ENCODE measurements at regions of chr1 and their contacts with region 1.

Region 1: GRCh38 chr1:167268398-167268787 is 47.7 kb downstream of the POU2F1 start:
- DNase-seq: no peak
- ATAC-seq: no peak
- H3K4me3 ChIP-seq: no peak overlapping the region
- H3K27ac ChIP-seq: no peak overlapping the region
- H3K4me1 ChIP-seq: peaks cover 8 to 21% of the 10 kb centered on the region in 2 experiments
- H3K27me3 ChIP-seq: no peaks in the 10 kb centered on the region
- CTCF ChIP-seq: no peak
- POLR2A ChIP-seq: no peak
- RAD21 ChIP-seq: no peak

Region 2: GRCh38 chr1:167330601-167331293 is 62.4 kb after region 1 on chr1:
- CTCF ChIA-PET with region 1: no interaction called
- POLR2A ChIA-PET with region 1: no interaction called
- RAD21 ChIA-PET with region 1: no interaction called
- intact Hi-C with region 1: no loop called
- DNase-seq: no peak
- ATAC-seq: no peak
- H3K4me3 ChIP-seq: no peak overlapping the region
- H3K27ac ChIP-seq: no peak overlapping the region
- H3K4me1 ChIP-seq: no peaks in the 10 kb centered on the region
- H3K27me3 ChIP-seq: no peaks in the 10 kb centered on the region
- CTCF ChIP-seq: no peak
- POLR2A ChIP-seq: no peak
- RAD21 ChIP-seq: no peak

Region 3: GRCh38 chr1:167342846-167343245 is 74.5 kb after region 1 on chr1:
- CTCF ChIA-PET with region 1: interaction called, 10 read pairs
- POLR2A ChIA-PET with region 1: no interaction called
- RAD21 ChIA-PET with region 1: interaction called in 1 of 2 experiments, 4 read pairs
- intact Hi-C with region 1: no loop called
- DNase-seq: no peak
- ATAC-seq: peak; percentile 74
- H3K4me3 ChIP-seq: no peak overlapping the region
- H3K27ac ChIP-seq: no peak overlapping the region
- H3K4me1 ChIP-seq: no peaks in the 10 kb centered on the region
- H3K27me3 ChIP-seq: no peaks in the 10 kb centered on the region
- CTCF ChIP-seq: peak; percentile 21 to 44 (median 23); a peak in 4 of 6 replicates
- POLR2A ChIP-seq: no peak
- RAD21 ChIP-seq: peak; percentile 41

Region 4: GRCh38 chr1:167409183-167409582 is 140.8 kb after region 1 on chr1:
- CTCF ChIA-PET with region 1: interaction called, 10 read pairs
- POLR2A ChIA-PET with region 1: no interaction called
- RAD21 ChIA-PET with region 1: interaction called in 1 of 2 experiments, 4 read pairs
- intact Hi-C with region 1: no loop called
- DNase-seq: peak; percentile 8
- ATAC-seq: peak; percentile 89
- H3K4me3 ChIP-seq: no peak overlapping the region
- H3K27ac ChIP-seq: no peak overlapping the region
- H3K4me1 ChIP-seq: peaks cover 0 to 4% of the 10 kb centered on the region in 2 experiments; a peak in 1 of 4 replicates
- H3K27me3 ChIP-seq: no peaks in the 10 kb centered on the region
- CTCF ChIP-seq: peak; percentile 22 to 53 (median 37); a peak in 4 of 6 replicates
- POLR2A ChIP-seq: no peak
- RAD21 ChIP-seq: peak; percentile 48

Region 5: DNA sequence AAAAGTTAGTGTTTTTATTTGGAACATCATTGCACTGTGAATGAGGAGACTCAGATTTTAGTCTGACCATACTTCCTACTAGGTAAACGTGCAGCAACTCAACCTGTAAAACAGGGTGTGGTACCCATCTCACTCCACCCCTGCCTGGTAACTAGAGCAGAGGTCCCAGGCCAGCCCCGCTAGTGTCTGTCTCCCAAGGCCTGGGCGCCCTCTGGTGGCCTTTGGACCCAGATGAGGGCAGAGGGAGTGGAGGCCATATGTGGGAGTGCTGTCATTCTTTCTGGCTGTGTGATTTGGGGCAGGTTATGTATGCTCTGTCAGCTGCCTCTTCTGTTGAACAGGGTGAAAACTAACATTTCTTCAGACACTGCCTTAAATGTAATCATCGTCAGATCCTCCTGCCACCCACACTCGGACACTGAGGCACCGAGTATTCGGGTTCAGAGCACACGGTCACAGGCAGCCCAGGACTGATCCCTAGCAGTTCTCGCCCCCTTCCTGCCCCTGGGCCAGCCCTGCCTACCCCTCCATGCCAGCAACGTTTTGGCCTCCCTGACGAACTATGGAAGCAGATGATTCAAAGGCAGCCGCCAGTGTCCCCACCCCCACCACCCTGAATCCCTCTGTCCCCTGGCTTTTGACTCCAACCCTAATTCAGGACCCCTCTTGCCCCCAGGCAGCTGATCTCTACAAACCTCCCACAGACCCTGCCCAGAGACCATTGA is 173.9 kb after region 1 on chr1:
- CTCF ChIA-PET with region 1: interaction called, 8 read pairs
- POLR2A ChIA-PET with region 1: no interaction called
- RAD21 ChIA-PET with region 1: no interaction called
- intact Hi-C with region 1: loop called (anchors 1 kb)
- DNase-seq: peak; percentile 77
- ATAC-seq: peak; percentile 99
- H3K4me3 ChIP-seq: no peak overlapping the region
- H3K27ac ChIP-seq: no peak overlapping the region
- H3K4me1 ChIP-seq: peaks cover 0 to 16% of the 10 kb centered on the region in 2 experiments; a peak in 3 of 4 replicates
- H3K27me3 ChIP-seq: no peaks in the 10 kb centered on the region
- CTCF ChIP-seq: peak; percentile 88 to 95 (median 93)
- POLR2A ChIP-seq: no peak
- RAD21 ChIP-seq: peak; percentile 99

Region 6: DNA sequence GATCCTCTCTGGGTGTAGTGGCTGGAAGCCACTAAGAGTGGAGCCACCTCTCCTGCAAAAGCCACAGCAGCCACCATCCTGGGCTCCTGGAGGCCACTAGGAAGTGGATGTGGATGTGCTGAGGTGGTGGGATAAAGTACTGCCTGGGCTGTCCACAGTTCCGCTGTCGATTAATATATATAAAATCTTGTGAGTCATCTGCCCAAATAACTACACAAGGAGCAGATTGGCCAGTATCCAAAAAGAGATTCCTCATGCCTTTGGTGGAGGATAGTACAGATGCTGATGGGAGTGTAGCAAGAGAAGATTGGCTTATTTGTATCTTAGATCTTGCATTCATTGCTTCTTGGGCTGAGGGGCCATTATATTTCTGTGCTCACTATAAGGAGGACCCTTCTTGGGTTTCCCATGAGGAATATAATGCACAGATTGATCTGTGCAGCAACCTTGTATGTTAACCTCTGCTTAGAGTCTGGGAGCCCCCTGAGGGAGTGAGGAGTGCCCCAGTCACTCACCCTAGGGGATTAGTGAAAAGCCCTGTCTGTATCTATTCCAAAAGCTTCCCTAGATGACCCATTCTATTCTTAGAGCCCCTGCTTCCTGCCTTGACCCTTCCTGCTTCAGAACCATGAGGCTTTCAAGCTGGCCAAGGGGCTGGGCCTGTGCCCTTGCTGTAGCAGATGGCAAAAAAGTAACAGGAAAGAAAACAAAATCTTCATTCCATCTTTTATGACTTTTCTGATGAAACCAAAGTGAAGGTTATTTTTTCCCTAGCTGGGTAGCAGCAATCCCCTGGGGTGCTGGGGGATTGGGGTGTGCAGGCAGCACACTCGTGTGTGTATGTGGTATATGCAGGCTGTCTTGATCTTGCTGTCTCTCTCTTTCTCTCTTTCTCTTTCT is 393.4 kb after region 1 on chr1:
- CTCF ChIA-PET with region 1: no interaction called
- POLR2A ChIA-PET with region 1: no interaction called
- RAD21 ChIA-PET with region 1: no interaction called
- intact Hi-C with region 1: no loop called
- DNase-seq: no peak
- ATAC-seq: no peak
- H3K4me3 ChIP-seq: no peak overlapping the region
- H3K27ac ChIP-seq: no peak overlapping the region
- H3K4me1 ChIP-seq: peaks cover 2 to 22% of the 10 kb centered on the region in 2 experiments; a peak in 3 of 4 replicates
- H3K27me3 ChIP-seq: no peaks in the 10 kb centered on the region
- CTCF ChIP-seq: no peak
- POLR2A ChIP-seq: no peak
- RAD21 ChIP-seq: no peak

Region 7: GRCh38 chr1:167715157-167715999 is 447.0 kb after region 1 on chr1:
- CTCF ChIA-PET with region 1: no interaction called
- POLR2A ChIA-PET with region 1: no interaction called
- RAD21 ChIA-PET with region 1: no interaction called
- intact Hi-C with region 1: no loop called
- DNase-seq: peak; percentile 86
- ATAC-seq: peak; percentile 57
- H3K4me3 ChIP-seq: peak overlapping the region; percentile 52 to 58
- H3K27ac ChIP-seq: peak overlapping the region; percentile 67
- H3K4me1 ChIP-seq: peaks cover 10 to 32% of the 10 kb centered on the region in 2 experiments
- H3K27me3 ChIP-seq: no peaks in the 10 kb centered on the region
- CTCF ChIP-seq: peak in 2 of 3 experiments; percentile 86; a peak in 4 of 6 replicates
- POLR2A ChIP-seq: no peak
- RAD21 ChIP-seq: no peak